Psoas muscle (tissue), 8 donors: ENCODE measurements at regions of chr10 and their contacts with region 1.

Region 1: DNA sequence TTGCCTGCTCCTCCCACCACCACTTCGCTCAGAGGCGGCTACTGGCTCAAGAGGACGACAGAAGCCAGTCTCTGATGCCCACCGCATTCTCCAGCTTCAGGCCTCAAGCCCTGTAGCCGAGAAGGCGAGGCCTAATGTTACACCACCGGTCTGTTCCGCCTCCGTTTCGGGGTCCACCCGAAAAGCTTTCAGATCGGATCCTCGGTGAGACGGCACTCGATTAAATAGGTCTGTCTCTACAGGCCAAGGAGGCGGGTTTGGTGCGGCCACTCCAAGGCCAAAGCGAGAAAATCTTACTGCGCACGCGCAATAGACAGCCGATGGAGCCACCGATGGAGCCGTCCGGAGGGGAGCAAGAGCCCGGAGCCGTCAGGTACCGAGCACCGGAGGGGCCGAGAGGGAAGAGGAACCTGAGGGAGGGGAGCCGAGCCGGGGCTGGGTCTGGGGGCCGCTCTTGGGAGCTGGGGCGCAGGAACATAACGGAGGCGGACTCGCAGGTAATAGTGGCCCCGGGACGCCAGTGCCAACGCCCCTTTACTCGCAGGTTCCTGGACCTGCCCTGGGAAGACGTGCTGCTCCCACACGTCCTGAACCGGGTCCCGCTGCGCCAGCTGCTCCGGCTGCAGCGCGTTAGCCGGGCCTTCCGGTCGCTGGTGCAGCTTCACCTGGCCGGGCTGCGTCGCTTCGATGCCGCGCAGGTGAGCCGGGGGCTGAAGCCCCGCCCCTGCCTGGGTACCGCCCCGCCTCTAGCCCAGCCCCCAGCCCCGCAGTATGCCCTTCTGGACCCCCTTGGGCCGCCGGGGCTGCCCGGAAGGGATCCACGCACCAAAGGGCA is at the start of gene FBXL15:
- DNase-seq: peak; percentile 95 to 98
- ATAC-seq: peak; percentile 89 to 91 (median 90)
- H3K4me3 ChIP-seq: peak within 1 kb of the TSS; percentile 98
- H3K27ac ChIP-seq: peak within 1 kb of the TSS; percentile 87
- H3K4me1 ChIP-seq: peaks cover 20% of the 10 kb centered on the region
- H3K27me3 ChIP-seq: peaks cover 0 to 23% (median 2%) of the 10 kb centered on the region in 3 donors
- CTCF ChIP-seq: no peak
- total RNA-seq, gene FBXL15: 7.9 to 13.3 (median 9.5) TPM

Region 2: GRCh38 chr10:102310361-102311024 is 110.5 kb before region 1 on chr10:
- intact Hi-C with region 1: no loop called
- DNase-seq: no peak
- ATAC-seq: no peak
- H3K4me3 ChIP-seq: no peak overlapping the region
- H3K27ac ChIP-seq: peak overlapping the region; percentile 32
- H3K4me1 ChIP-seq: peaks cover 73% of the 10 kb centered on the region
- H3K27me3 ChIP-seq: no peaks in the 10 kb centered on the region
- CTCF ChIP-seq: no peak

Region 3: GRCh38 chr10:102375250-102375649 is 45.8 kb before region 1 on chr10:
- intact Hi-C with region 1: no loop called
- DNase-seq: no peak
- ATAC-seq: no peak
- H3K4me3 ChIP-seq: no peak overlapping the region
- H3K27ac ChIP-seq: no peak overlapping the region
- H3K4me1 ChIP-seq: no peaks in the 10 kb centered on the region
- H3K27me3 ChIP-seq: no peaks in the 10 kb centered on the region
- CTCF ChIP-seq: no peak

Region 4: DNA sequence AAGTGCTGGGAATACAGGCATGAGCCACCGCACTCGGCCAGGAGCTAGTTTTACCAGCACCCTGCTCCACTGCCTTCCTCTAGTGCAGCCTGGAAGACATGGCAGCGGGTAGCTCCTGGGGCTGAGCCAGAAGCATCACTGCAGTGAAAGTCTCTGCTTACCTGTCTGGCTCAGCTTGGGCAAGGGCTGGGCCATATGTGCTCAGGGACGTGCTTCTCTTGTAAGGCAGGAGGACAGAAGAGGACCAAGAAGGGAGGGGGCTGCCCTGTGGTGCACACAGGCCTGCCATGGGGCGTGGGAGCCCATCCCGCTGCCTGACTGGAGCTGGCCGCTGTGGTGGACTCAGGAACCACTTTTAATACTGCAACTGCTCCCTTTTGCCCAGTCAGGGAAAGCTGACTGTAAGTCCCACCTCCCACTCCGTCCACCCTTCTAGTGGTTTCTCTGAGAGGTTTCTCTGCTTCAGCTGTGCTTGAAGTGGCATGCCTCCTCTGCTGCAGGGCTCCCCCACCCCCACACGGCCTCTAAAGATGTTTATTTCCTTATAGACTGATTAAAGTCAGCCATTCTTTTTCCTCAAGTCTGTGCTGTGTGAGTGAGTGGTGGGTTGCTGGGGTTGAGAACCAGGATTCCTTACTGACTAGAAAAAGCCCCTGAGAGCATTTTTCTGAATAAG is 55.6 kb after region 1 on chr10:
- intact Hi-C with region 1: loop called in 1 of 2 experiments (anchors 5 kb)
- DNase-seq: peak in 1 of 2 donors; percentile 45
- ATAC-seq: no peak
- H3K4me3 ChIP-seq: no peak overlapping the region
- H3K27ac ChIP-seq: peak overlapping the region; percentile 16
- H3K4me1 ChIP-seq: no peaks in the 10 kb centered on the region
- H3K27me3 ChIP-seq: no peaks in the 10 kb centered on the region
- CTCF ChIP-seq: no peak

Region 5: GRCh38 chr10:102593074-102593803 is 172.2 kb after region 1 on chr10:
- intact Hi-C with region 1: no loop called
- DNase-seq: no peak
- ATAC-seq: no peak
- H3K4me3 ChIP-seq: no peak overlapping the region
- H3K27ac ChIP-seq: no peak overlapping the region
- H3K4me1 ChIP-seq: peaks cover 20% of the 10 kb centered on the region
- H3K27me3 ChIP-seq: no peaks in the 10 kb centered on the region
- CTCF ChIP-seq: no peak

Region 6: DNA sequence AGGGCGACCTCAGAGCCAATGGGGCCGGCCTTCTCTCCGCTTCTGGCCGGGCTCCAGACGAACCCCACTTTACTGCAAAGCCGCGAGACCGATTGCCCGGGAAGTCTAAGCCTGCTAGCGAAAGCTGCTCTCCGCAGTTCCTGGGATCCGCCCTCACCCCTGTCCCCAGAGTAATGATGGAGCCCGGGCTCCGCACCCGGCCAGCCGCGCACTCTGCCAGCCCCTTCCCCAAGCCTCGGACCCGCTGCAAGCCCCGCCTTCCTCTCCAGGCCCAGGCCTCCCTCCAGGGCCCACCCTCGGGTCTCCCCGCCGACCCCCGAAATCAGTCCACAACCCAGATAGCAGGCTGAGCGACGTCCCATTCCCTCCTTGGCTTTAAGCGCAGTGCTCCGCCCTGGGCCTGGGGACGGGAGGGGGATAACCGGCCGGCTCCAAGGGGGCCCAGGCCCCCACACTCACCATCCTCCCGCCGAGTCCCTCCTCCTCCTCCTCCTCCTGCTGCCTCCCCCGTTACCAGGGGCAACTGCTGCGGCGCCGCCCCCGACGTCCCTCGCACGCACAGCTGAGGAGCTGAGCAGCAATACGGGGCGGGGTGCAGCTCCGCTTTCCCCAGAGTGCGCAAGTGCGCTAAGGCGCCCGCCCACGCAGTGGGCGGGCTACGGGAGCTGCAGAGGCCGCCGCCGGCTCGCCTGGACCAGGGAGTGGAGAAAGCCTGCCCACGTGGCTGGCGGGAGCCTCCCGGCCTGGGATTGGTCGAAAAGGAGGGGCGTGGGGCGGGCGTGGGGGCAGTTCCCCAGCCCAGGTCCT is 293.0 kb after region 1 on chr10 and contains the start of gene ARL3:
- intact Hi-C with region 1: no loop called
- DNase-seq: peak; percentile 98 to 99
- ATAC-seq: peak; percentile 97 to 99 (median 98)
- H3K4me3 ChIP-seq: peak within 1 kb of the TSS; percentile 85
- H3K27ac ChIP-seq: peak within 1 kb of the TSS; percentile 69
- H3K4me1 ChIP-seq: peaks cover 33% of the 10 kb centered on the region
- H3K27me3 ChIP-seq: no peaks in the 10 kb centered on the region
- CTCF ChIP-seq: peak; percentile 40
- total RNA-seq, gene ARL3: 2.8 to 5.3 (median 3.3) TPM